MCF 10A (cell line): ENCODE measurements at regions of chr1 and their contacts with region 1.

Region 1: GRCh38 chr1:162690672-162691434 is 58.6 kb downstream of the DDR2 start:
- DNase-seq: peak; percentile 99
- H3K4me3 Mint-ChIP-seq: no peak overlapping the region
- H3K27ac Mint-ChIP-seq: peak overlapping the region; percentile 46
- H3K4me1 Mint-ChIP-seq: peaks cover 26% of the 10 kb centered on the region
- H3K27me3 Mint-ChIP-seq: no peaks in the 10 kb centered on the region
- CTCF ChIP-seq: no peak

Region 2: DNA sequence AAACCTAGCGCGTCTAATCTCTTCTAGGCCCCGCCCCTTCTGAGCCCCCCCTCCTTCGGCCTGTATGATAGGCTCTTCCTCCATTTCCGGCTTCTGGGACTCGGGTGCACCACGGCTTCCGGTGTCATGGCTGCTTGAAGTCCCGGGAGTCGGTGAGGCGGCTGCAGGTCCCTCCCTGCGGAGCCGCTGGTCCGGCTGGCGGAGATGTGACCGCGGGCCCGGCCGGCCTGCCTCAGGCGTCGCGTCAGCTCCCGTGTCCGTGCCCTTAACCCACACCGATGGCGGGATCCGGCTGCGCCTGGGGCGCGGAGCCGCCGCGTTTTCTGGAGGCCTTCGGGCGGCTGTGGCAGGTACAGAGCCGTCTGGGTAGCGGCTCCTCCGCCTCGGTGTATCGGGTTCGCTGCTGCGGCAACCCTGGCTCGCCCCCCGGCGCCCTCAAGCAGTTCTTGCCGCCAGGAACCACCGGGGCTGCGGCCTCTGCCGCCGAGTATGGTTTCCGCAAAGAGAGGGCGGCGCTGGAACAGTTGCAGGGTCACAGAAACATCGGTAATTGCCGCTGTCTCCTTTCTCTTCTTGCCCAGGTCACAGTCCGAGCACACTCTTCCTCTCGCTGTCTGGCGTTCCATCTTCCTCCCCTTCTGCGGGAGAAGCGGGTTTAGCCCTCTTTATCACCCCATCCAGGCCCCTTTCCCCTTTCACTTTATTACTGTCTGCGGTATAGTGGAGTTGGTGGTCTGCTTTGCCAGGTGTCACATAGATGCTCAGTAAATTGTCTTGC is 192.9 kb before region 1 on chr1 and contains the start of gene UHMK1:
- CTCF ChIA-PET with region 1: no interaction called
- POLR2A ChIA-PET with region 1: no interaction called
- intact Hi-C with region 1: no loop called
- DNase-seq: peak; percentile 97
- H3K4me3 Mint-ChIP-seq: peak within 1 kb of the TSS; percentile 91
- H3K27ac Mint-ChIP-seq: peak within 1 kb of the TSS; percentile 82
- H3K4me1 Mint-ChIP-seq: peaks cover 12% of the 10 kb centered on the region
- H3K27me3 Mint-ChIP-seq: peaks cover 8% of the 10 kb centered on the region
- CTCF ChIP-seq: no peak
- total RNA-seq, gene UHMK1: 76.9 and 102 TPM in 2 replicates

Region 3: GRCh38 chr1:162678439-162678838 is 12.4 kb before region 1 on chr1:
- CTCF ChIA-PET with region 1: interaction called, 37 read pairs
- POLR2A ChIA-PET with region 1: interaction called, 99 read pairs
- intact Hi-C with region 1: no loop called
- DNase-seq: peak; percentile 94
- H3K4me3 Mint-ChIP-seq: peak overlapping the region; percentile 51
- H3K27ac Mint-ChIP-seq: peak overlapping the region; percentile 89
- H3K4me1 Mint-ChIP-seq: peaks cover 48% of the 10 kb centered on the region
- H3K27me3 Mint-ChIP-seq: no peaks in the 10 kb centered on the region
- CTCF ChIP-seq: no peak